Heart right ventricle (tissue), 16 donors: ENCODE measurements at regions of chr10 and their contacts with region 1.

Region 1: DNA sequence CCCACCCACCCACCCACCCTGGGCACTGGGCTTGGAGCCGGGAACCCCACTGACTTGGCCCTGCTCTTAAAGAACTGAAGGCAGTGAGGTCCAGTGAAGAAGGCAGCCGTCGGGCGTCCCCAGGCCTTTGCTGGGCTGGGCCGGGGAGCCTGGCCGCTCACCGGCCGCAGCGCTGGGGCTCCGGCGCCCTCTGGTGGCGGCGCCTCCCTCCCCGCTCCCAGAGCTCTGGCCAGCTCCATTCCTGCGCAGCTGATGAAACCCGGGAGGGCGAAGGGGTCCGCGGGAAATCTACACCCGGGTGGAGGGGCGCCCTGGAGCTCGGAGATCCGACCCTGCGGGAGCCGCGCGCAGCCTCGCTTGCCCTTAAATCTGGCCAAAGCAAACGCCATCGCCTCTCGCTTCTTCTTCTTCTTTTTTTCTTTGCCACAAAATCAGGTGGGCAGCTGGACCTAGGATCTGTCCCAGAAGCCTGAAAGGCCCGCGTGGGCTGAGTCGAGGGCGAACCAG is 1.7 kb upstream of the CXCL12 start:
- DNase-seq: peak; percentile 51 to 79
- ATAC-seq: peak; percentile 80 to 87 (median 83)
- H3K4me3 ChIP-seq: peak overlapping the region in 5 of 10 donors; percentile 19 to 95 (median 25)
- H3K27ac ChIP-seq: peak overlapping the region in 3 of 10 donors; percentile 81 to 92 (median 91)
- H3K4me1 ChIP-seq: peaks cover 3 to 51% (median 22%) of the 10 kb centered on the region in 9 donors
- H3K27me3 ChIP-seq: peaks cover 0 to 48% (median 0%) of the 10 kb centered on the region in 7 donors
- CTCF ChIP-seq: peak; percentile 87 to 95 (median 91)

Region 2: GRCh38 chr10:43671656-43672531 is 714.7 kb before region 1 on chr10:
- intact Hi-C with region 1: loop called (anchors 1 to 5 kb)
- DNase-seq: peak in 1 of 2 donors; percentile 69
- ATAC-seq: peak; percentile 58 to 78 (median 70)
- H3K4me3 ChIP-seq: no peak overlapping the region
- H3K27ac ChIP-seq: peak overlapping the region in 1 of 10 donors; percentile 38
- H3K4me1 ChIP-seq: peaks cover 0 to 37% (median 8%) of the 10 kb centered on the region in 9 donors
- H3K27me3 ChIP-seq: peaks cover 0 to 32% (median 16%) of the 10 kb centered on the region in 7 donors
- CTCF ChIP-seq: peak; percentile 64 to 89 (median 79)

Region 3: GRCh38 chr10:43857206-43857930 is 529.2 kb before region 1 on chr10:
- intact Hi-C with region 1: loop called in 1 of 10 experiments (anchors 10 kb)
- DNase-seq: no peak
- ATAC-seq: peak in 1 of 8 donors; percentile 26
- H3K4me3 ChIP-seq: no peak overlapping the region
- H3K27ac ChIP-seq: peak overlapping the region in 3 of 10 donors; percentile 22 to 65 (median 57)
- H3K4me1 ChIP-seq: peaks cover 0 to 68% (median 22%) of the 10 kb centered on the region in 9 donors
- H3K27me3 ChIP-seq: no peaks in the 10 kb centered on the region
- CTCF ChIP-seq: no peak

Region 4: GRCh38 chr10:43922335-43923280 is 464.0 kb before region 1 on chr10:
- intact Hi-C with region 1: loop called in 3 of 10 experiments (anchors 10 kb)
- DNase-seq: no peak
- ATAC-seq: peak in 7 of 8 donors; percentile 31 to 72 (median 47)
- H3K4me3 ChIP-seq: no peak overlapping the region
- H3K27ac ChIP-seq: no peak overlapping the region
- H3K4me1 ChIP-seq: peaks cover 0 to 13% (median 8%) of the 10 kb centered on the region in 9 donors
- H3K27me3 ChIP-seq: no peaks in the 10 kb centered on the region
- CTCF ChIP-seq: peak in 3 of 9 donors; percentile 13 to 39 (median 27)

Region 5: DNA sequence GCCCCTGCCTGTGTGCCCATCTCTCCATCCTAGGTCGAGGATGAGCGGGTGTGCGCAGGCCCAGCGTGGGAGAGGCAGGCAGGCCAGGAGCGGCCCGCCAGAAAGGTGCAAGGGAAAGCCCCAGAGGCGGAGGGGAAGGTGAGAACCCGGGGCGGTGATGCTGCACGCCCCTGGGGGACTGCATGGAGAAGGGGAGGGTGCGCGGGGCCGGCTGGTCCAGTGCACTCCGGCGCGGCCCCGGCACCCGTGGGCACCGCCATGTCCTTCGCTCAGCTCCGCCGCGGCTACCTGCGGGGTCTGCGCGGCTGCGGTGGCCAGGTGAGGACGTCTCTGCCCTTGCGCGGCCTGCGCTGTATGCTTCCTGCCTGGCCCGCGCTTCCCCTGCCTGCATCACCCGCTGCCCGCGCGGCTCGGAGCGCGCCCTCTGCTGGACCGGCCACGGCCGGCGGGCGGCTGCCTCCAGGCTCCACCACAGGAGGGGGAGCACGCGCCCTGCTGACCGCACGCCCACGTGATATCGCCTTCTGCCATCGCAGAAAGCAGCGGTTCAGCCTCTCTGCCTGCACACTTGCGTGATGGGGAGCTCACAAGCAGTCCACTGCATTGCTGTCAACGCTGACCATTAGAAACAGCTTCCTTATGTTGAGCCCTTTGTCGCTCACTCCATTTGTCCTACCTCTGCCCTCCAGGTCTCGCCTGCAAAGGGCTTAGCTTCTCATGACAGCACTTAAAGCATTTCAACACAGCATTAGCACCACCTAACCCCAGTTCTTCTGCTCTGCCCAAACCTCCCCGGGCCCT is 75.6 kb before region 1 on chr10:
- intact Hi-C with region 1: loop called in 8 of 10 experiments (anchors 5 to 10 kb)
- DNase-seq: peak; percentile 87 to 91
- ATAC-seq: peak; percentile 95 to 99 (median 98)
- H3K4me3 ChIP-seq: peak overlapping the region in 9 of 10 donors; percentile 26 to 55 (median 48)
- H3K27ac ChIP-seq: peak overlapping the region in 5 of 10 donors; percentile 46 to 72 (median 65)
- H3K4me1 ChIP-seq: peaks cover 4 to 14% (median 10%) of the 10 kb centered on the region in 9 donors
- H3K27me3 ChIP-seq: no peaks in the 10 kb centered on the region
- CTCF ChIP-seq: peak; percentile 90 to 100 (median 98)

Region 6: GRCh38 chr10:44857363-44858016 is 470.9 kb after region 1 on chr10:
- intact Hi-C with region 1: loop called in 5 of 10 experiments (anchors 2 to 10 kb)
- DNase-seq: peak; percentile 78 to 79
- ATAC-seq: peak; percentile 73 to 91 (median 86)
- H3K4me3 ChIP-seq: no peak overlapping the region
- H3K27ac ChIP-seq: peak overlapping the region in 1 of 10 donors; percentile 3
- H3K4me1 ChIP-seq: peaks cover 0 to 28% (median 0%) of the 10 kb centered on the region in 9 donors
- H3K27me3 ChIP-seq: peaks cover 0 to 8% (median 0%) of the 10 kb centered on the region in 7 donors
- CTCF ChIP-seq: peak; percentile 95 to 100 (median 98)